PC-3 (cell line): ENCODE measurements at regions of chr19 and their contacts with region 1.

Region 1: DNA sequence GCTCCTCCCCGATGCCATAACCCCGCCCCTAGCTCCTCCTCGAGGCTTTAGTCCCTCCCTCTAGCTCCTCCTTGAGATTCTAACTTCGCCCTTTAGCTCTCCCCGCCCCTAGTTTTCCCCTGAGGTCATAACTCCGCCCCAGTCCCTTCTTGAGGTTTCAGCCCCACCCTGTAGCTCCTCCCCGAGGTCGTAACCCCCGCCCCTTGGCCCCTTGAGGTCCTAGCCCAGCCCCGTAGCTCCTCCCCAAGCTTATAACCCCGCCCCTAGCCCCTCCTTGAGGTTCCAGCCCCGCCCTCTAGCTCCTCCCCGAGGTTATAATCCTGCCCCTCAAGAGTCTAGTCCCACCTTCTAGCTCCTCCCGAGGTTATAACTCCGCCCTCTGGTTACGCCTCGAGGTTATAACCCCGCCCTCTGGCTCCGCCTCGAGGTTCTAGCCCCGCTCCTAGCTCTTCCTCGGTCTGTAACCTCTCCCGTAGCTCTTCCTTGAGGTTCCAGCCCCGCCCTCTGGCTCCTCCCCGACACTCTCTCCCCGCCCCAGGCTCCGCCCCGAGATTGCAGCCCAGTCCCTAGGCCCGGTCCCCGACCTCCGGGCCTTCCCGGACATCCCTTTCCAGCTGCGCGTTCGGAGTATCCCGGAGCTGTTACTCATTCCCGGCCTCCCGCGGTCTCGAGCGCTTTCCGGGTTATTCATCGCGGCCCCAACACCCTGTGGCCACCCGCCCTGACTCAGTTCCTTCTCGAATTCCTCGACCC is 1.4 kb downstream of the PLAUR start:
- DNase-seq: peak; percentile 98
- ATAC-seq: peak; percentile 83
- H3K4me3 ChIP-seq: peak overlapping the region; percentile 99
- H3K27ac ChIP-seq: peak overlapping the region; percentile 91
- H3K4me1 ChIP-seq: peaks cover 9% of the 10 kb centered on the region; the same call in 1 of the 2 replicates
- H3K27me3 ChIP-seq: no peaks in the 10 kb centered on the region
- CTCF ChIP-seq: no peak

Region 2: DNA sequence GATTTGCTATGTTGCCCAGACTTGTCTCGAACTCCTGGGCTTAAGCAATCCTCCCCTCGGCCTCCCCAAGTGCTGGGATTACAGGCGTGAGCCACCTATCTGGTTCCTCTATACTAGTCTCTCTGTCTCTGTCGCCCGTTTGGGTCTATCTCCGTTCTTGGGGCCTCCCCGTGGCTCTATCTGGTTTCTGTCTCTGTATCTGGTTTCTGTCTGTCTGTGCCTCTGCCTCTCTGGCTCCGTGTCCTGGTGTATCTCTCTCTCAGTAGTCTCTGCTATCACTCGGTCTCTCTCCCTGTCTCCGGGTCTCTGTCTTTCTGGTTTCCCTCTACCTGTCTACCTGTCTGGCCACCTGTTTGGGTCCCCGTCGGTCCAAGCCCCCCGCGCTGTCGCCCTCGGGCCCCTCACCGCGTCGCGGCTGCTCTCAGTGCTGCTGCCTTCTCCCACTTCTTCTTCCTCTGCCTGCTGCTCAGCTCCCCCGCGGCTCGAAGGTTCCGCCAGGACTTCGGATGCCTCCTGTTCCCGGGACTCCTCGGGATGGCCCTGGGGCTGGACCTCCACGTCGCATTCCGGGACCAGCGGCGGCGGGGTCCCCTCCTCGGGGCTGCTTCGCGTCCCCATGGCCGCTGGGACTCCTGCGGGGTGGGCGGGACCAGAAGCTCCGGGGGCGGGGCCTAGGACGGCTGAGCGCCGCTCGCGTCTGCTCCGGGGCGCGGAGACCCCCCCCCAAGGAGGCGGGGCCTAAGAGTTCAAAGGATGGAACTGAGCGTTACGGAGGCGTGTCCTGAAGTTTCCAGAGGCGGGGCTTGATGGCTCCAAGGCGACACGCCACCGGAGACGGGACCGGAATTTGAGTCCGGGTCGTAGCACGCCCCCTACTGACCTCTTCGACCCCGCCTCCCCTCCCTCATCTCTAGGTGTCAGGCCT is 164.8 kb before region 1 on chr19:
- CTCF ChIA-PET with region 1: no interaction called
- POLR2A ChIA-PET with region 1: interaction called, 25 read pairs
- intact Hi-C with region 1: no loop called
- DNase-seq: peak; percentile 91
- ATAC-seq: peak; percentile 92
- H3K4me3 ChIP-seq: peak overlapping the region; percentile 84
- H3K27ac ChIP-seq: no peak overlapping the region
- H3K4me1 ChIP-seq: 0 out of 2 replicates have a peak, but pooled peaks cover 9% of the 10 kb centered on the region
- H3K27me3 ChIP-seq: no peaks in the 10 kb centered on the region
- CTCF ChIP-seq: no peak; the same call in 1 of the 2 replicates

Region 3: GRCh38 chr19:43532962-43533545 is 135.5 kb before region 1 on chr19 and contains the start of gene ZNF575:
- CTCF ChIA-PET with region 1: interaction called, 14 read pairs
- POLR2A ChIA-PET with region 1: interaction called, 15 read pairs
- intact Hi-C with region 1: no loop called
- DNase-seq: peak; percentile 88
- ATAC-seq: peak; percentile 66
- H3K4me3 ChIP-seq: peak within 1 kb of the TSS; percentile 69
- H3K27ac ChIP-seq: peak within 1 kb of the TSS; percentile 67
- H3K4me1 ChIP-seq: peaks cover 13% of the 10 kb centered on the region
- H3K27me3 ChIP-seq: no peaks in the 10 kb centered on the region
- CTCF ChIP-seq: no peak
- total RNA-seq, gene ZNF575: 0.98 TPM in 1 of 2 replicates, not detected in the other

Region 4: DNA sequence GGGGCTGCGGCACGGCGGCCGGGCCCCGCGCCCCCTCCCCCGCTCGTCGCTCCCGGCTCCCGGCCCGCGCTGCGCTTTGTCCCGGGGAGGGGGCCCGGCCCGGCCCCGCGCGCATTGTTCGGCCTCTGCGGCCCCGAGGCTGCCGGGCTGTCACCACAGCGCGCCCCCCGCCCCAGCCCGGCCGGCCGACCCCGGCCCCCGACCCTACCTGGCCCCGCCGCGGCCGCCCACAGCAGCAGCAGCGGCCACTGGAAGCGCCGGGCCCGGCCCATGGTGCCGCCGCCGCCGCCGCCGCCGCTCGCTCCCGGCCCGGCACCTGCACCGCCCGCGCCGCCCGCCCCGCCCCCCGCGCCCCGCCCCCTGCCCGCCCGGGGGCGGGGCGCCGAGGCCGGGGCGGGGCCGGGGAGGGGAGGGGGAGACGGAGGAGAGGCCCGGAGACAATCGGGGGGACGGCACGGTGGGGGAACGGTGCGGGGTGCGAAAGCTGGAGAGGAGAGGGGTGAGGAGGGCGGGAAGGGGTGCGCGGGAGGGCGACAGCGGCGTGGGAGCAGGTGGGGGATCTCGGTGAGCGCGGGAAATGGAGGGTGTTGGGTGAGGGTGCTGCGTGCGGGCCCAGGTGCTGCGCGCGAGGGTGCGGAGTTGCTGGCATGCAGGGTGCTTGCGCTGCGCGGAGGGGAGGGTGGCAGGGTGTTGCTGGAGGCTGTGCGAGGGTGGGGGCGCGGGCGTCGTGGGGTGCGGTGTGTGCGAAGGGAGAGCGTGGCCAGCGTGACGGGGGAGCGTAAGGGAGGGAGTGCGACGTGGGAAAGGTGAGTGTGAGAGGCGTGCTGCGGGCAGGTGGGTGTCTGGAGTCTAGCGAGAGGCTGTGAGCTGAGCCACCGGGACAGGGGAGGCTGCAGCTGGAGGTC is 28.8 kb before region 1 on chr19 and contains the start of gene CADM4:
- CTCF ChIA-PET with region 1: interaction called, 11 read pairs
- POLR2A ChIA-PET with region 1: no interaction called
- intact Hi-C with region 1: no loop called
- DNase-seq: no peak
- ATAC-seq: peak; percentile 78
- H3K4me3 ChIP-seq: peak within 1 kb of the TSS; percentile 61
- H3K27ac ChIP-seq: no peak within 1 kb of the TSS
- H3K4me1 ChIP-seq: no peaks in the 10 kb centered on the region; the same call in 1 of the 2 replicates
- H3K27me3 ChIP-seq: no peaks in the 10 kb centered on the region
- CTCF ChIP-seq: no peak
- total RNA-seq, gene CADM4: 13.7 and 15.0 TPM in 2 replicates

Region 5: DNA sequence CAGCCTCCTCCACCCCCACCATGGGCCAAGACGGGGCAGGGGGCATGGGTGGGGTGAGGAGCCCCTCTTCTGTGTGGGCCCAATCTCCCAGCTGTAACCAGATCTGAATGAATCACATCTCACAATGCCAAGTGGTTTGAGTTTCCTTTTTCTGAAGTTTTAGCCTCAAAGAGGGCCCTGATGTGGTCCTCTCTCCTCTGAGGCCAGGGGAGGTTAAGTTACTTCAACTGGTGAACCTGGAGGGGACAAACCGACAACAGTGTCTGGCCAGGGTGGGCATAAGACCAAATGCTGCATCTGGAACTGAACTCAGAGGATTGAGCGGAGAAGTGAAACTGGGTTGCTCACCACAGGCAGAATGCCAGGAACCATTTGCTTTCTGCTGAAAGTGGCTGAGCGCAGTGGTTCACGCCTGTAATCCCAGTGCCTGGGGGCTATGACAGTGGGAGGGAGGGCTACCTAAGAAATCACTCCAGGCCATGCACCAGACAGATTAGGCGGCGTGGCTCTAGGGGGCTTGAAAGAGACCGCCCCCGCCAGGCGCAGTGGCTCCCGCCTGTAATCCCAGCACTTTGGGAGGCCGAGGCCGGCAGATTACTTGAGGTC is 31.9 kb after region 1 on chr19:
- CTCF ChIA-PET with region 1: interaction called, 7 read pairs
- POLR2A ChIA-PET with region 1: interaction called, 17 read pairs
- intact Hi-C with region 1: loop called (anchors 2 kb)
- DNase-seq: peak; percentile 70
- ATAC-seq: peak; percentile 23; the same call in 1 of the 2 replicates
- H3K4me3 ChIP-seq: peak overlapping the region; percentile 64
- H3K27ac ChIP-seq: peak overlapping the region; percentile 95
- H3K4me1 ChIP-seq: peaks cover 46% of the 10 kb centered on the region
- H3K27me3 ChIP-seq: no peaks in the 10 kb centered on the region
- CTCF ChIP-seq: no peak

Region 6: DNA sequence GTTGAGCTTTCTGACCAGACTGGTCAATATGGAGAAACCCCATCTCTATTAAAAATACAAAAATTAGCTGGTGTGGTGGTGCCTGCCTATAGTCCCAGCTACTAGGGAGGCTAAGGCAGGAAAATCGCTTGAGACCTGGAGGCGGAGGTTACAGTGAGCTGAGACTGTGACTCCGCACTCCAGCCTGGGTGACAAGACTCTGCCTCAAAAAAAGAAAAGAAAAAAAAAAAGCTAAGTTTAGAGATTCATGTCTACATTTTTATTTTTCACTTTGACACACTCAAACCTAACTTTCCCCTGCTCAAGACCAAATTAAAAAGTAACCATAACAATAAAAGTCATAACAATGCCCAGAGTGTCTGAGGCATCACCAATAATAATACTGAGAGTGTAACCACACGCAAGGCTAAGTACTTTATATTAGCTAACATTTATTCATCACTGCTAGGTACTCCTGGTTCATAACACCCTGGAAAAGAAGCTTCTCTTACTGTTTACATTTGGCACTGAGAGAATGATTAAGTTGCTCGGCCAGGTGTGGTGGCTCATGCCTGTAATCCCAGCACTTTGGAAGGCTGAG is 53.0 kb after region 1 on chr19:
- CTCF ChIA-PET with region 1: interaction called, 6 read pairs
- POLR2A ChIA-PET with region 1: interaction called, 23 read pairs
- intact Hi-C with region 1: no loop called
- DNase-seq: no peak
- ATAC-seq: no peak
- H3K4me3 ChIP-seq: no peak overlapping the region
- H3K27ac ChIP-seq: no peak overlapping the region
- H3K4me1 ChIP-seq: no peaks in the 10 kb centered on the region
- H3K27me3 ChIP-seq: no peaks in the 10 kb centered on the region
- CTCF ChIP-seq: no peak

Region 7: GRCh38 chr19:43743022-43743421 is 74.4 kb after region 1 on chr19:
- CTCF ChIA-PET with region 1: interaction called, 9 read pairs
- POLR2A ChIA-PET with region 1: no interaction called
- intact Hi-C with region 1: loop called (anchors 5 kb)
- DNase-seq: no peak
- ATAC-seq: no peak
- H3K4me3 ChIP-seq: no peak overlapping the region
- H3K27ac ChIP-seq: no peak overlapping the region
- H3K4me1 ChIP-seq: peaks cover 18% of the 10 kb centered on the region
- H3K27me3 ChIP-seq: no peaks in the 10 kb centered on the region
- CTCF ChIP-seq: no peak

Region 8: DNA sequence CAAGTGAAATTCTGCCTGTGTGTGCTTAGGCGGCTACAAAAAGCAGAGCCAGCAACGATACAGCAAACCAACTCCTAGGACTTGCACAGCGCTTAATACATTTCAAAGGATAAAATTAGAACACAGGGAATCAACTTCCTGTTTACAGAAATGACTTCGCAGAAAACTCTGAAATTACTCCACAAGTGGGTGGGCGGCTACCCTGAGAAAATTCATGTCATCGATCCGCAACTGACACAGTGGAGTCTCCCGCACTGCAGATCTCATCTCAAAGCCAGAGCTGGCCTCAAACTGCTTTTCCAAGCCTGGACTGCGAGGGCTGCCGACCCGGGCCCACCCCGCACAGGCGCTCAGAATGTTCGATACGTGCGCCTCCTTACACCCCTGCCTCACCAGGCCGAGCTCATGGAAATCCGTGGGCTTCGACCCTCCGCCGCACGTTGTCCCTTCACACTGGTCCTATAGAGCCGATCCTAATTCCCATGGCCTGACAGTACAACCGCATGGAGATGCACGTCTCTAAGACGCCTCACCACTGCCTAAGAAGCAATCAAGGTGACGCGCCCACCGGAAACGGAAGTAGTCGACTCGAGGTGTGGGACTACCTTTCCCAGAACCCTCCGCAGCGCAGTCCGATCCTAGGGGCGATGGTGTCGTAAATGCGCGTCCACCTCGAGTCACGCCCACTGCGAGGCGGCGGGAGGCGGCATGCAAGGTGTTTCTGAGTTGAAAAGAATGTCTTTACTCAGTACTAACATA is 779.5 kb after region 1 on chr19 and contains the start of gene ZNF229:
- CTCF ChIA-PET with region 1: no interaction called
- POLR2A ChIA-PET with region 1: no interaction called
- intact Hi-C with region 1: no loop called
- DNase-seq: peak; percentile 65
- ATAC-seq: no peak
- H3K4me3 ChIP-seq: peak within 1 kb of the TSS; percentile 64
- H3K27ac ChIP-seq: no peak within 1 kb of the TSS
- H3K4me1 ChIP-seq: no peaks in the 10 kb centered on the region
- H3K27me3 ChIP-seq: no peaks in the 10 kb centered on the region
- CTCF ChIP-seq: no peak
- total RNA-seq, gene ZNF229: 2.4 and 6.2 TPM in 2 replicates